ENCODE measurements at regions of chr7 and their contacts with region 1.

Region 1: GRCh38 chr7:32347244-32347828 is 142.8 kb downstream of the LSM5 start:
- DNase-seq: peak in 1 of 3 donors; percentile 59
- ATAC-seq: no peak
- H3K4me3 ChIP-seq: no peak overlapping the region
- H3K27ac ChIP-seq: no peak overlapping the region
- H3K4me1 ChIP-seq: no peaks in the 10 kb centered on the region
- H3K27me3 ChIP-seq: no peaks in the 10 kb centered on the region

Region 2: GRCh38 chr7:31744294-31744874 is 603.0 kb before region 1 on chr7:
- intact Hi-C with region 1: loop called in 1 of 4 experiments (anchors 10 kb)
- DNase-seq: peak; percentile 49 to 82 (median 67)
- ATAC-seq: peak; percentile 57 to 67
- H3K4me3 ChIP-seq: no peak overlapping the region
- H3K27ac ChIP-seq: no peak overlapping the region
- H3K4me1 ChIP-seq: no peaks in the 10 kb centered on the region
- H3K27me3 ChIP-seq: no peaks in the 10 kb centered on the region

Region 3: GRCh38 chr7:32212321-32212720 is 135.0 kb before region 1 on chr7:
- intact Hi-C with region 1: loop called (anchors 2 to 10 kb)
- DNase-seq: no peak
- ATAC-seq: no peak
- H3K4me3 ChIP-seq: no peak overlapping the region
- H3K27ac ChIP-seq: no peak overlapping the region
- H3K4me1 ChIP-seq: peaks cover 1% of the 10 kb centered on the region
- H3K27me3 ChIP-seq: no peaks in the 10 kb centered on the region

Region 4: DNA sequence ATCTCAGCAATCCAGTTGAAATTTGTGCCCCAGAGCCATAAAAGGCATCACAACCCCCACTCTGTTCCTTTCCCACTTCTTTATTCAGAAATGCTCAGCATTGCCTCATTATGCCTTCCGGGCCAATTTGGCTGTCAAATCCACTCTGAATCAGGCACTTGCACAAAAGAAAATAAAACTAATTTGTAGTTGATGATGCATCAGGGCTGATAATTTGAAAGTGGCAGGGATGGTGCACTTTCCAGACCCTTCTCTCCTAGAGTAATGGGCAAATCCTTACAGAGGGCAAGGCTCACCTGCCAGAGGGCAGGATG is 129.2 kb before region 1 on chr7:
- intact Hi-C with region 1: loop called (anchors 2 to 10 kb)
- DNase-seq: peak in 2 of 3 donors; percentile 26 to 63
- ATAC-seq: peak; percentile 73 to 85
- H3K4me3 ChIP-seq: no peak overlapping the region
- H3K27ac ChIP-seq: no peak overlapping the region
- H3K4me1 ChIP-seq: peaks cover 3% of the 10 kb centered on the region
- H3K27me3 ChIP-seq: no peaks in the 10 kb centered on the region

Region 5: DNA sequence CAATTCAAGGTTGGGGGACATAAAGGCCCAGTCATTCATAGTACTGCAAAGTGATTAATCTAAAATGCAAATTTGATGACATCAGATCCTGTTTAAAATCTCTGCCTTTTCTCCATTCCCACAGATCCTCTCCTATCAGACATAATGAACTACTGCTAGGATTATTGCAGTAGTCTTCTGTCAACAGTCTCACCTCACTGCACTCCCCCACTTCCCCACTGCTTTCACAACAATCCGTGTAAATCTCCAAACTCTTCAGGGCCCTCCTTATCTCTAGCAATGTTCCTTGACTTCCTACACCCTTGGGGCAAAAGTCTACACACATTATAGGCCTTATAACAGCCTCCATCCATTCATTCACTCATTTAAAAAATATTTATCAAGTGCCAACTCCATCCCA is 431.8 kb after region 1 on chr7:
- intact Hi-C with region 1: no loop called
- DNase-seq: no peak
- ATAC-seq: no peak
- H3K4me3 ChIP-seq: no peak overlapping the region
- H3K27ac ChIP-seq: no peak overlapping the region
- H3K4me1 ChIP-seq: no peaks in the 10 kb centered on the region
- H3K27me3 ChIP-seq: no peaks in the 10 kb centered on the region

Measured in right cardiac atrium (tissue), 5 donors.